AG04449 (cell line): ENCODE measurements at regions of chr10 and their contacts with region 1.

Region 1: GRCh38 chr10:71835671-71836595 is 15.1 kb downstream of the PSAP start:
- DNase-seq: peak; percentile 70
- H3K4me3 ChIP-seq: no peak overlapping the region
- CTCF ChIP-seq: no peak

Region 2: GRCh38 chr10:71850637-71851464 is 14.9 kb after region 1 on chr10 and contains the start of gene PSAP:
- CTCF ChIA-PET with region 1: interaction called, 4 read pairs
- POLR2A ChIA-PET with region 1: interaction called, 47 read pairs
- DNase-seq: peak; percentile 69
- H3K4me3 ChIP-seq: peak within 1 kb of the TSS; percentile 99
- CTCF ChIP-seq: no peak